Activated T-helper 1 cell treated with anti-CD3 and anti-CD28 coated beads, Interleukin-12 subunit alpha, Interleukin-12 subunit beta, Interleukin-2, Interleukin-4 antibody, amounts not matched to agents 30 ng/mL and 10 ng/mL and 1 ng/mL, durations not matched to agents 14 hours and 24 hours and 36 hours (primary cell): ENCODE measurements at regions of chr5 and their contacts with region 1.

Region 1: DNA sequence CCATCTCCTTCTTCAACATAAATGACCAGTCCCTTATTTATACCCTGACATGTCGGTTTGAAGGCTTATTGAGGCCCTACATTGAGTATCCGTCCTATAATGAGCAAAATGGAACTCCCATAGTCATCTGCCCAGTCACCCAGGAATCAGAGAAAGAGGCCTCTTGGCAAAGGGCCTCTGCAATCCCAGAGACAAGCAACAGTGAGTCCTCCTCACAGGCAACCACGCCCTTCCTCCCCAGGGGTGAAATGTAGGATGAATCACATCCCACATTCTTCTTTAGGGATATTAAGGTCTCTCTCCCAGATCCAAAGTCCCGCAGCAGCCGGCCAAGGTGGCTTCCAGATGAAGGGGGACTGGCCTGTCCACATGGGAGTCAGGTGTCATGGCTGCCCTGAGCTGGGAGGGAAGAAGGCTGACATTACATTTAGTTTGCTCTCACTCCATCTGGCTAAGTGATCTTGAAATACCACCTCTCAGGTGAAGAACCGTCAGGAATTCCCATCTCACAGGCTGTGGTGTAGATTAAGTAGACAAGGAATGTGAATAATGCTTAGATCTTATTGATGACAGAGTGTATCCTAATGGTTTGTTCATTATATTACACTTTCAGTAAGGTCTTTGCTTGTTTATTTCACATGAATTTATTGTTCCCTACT is 38.2 kb upstream of the BTNL3 start:
- DNase-seq: no peak
- H3K4me3 Mint-ChIP-seq: no peak overlapping the region
- H3K27ac Mint-ChIP-seq: no peak overlapping the region
- H3K4me1 Mint-ChIP-seq: no peaks in the 10 kb centered on the region
- H3K27me3 Mint-ChIP-seq: no peaks in the 10 kb centered on the region

Region 2: GRCh38 chr5:181005791-181006190 is 55.4 kb after region 1 on chr5:
- intact Hi-C with region 1: loop called (anchors 1 kb)
- DNase-seq: no peak
- H3K4me3 Mint-ChIP-seq: no peak overlapping the region
- H3K27ac Mint-ChIP-seq: no peak overlapping the region
- H3K4me1 Mint-ChIP-seq: no peaks in the 10 kb centered on the region
- H3K27me3 Mint-ChIP-seq: peaks cover 3% of the 10 kb centered on the region

Region 3: GRCh38 chr5:181052672-181053487 is 102.5 kb after region 1 on chr5:
- intact Hi-C with region 1: no loop called
- DNase-seq: no peak
- H3K4me3 Mint-ChIP-seq: peak overlapping the region; percentile 72
- H3K27ac Mint-ChIP-seq: no peak overlapping the region
- H3K4me1 Mint-ChIP-seq: peaks cover 6% of the 10 kb centered on the region
- H3K27me3 Mint-ChIP-seq: peaks cover 63% of the 10 kb centered on the region